Caki2 (cell line): ENCODE measurements at regions of chr11 and their contacts with region 1.

Region 1: GRCh38 chr11:88543902-88544655 is 206.5 kb upstream of the CTSC start:
- DNase-seq: peak; percentile 78

Region 2: DNA sequence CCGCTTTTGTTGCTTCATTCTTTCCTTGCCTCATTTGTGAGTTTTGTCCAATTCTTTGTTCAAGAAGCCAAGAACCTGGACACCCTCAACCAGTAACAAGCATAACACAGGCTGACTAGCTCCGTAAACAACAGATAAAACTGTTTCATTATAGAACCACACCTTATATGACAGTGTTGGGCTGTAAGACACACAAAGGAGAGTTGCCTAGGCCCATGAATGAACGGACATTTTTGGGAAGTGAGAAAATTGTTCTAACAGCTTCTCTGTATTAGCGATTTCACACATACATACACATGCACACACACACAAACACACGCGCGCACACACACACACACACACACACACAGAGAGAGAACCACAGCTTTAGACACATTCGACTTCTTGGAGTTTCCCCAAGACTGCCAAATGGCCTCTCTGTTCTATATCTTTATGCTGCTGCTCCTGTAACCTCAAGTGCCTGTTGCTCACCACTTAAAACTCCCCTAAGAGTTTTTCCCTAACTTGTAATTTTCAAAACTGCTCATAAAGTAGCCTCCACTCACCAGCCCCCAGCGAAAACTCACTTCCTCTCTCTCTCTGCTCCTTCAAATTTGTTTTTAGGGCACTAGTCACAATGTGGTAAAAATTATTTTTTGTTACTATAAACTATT is 242.5 kb before region 1 on chr11:
- in situ Hi-C with region 1: loop called (anchors 25 kb)
- DNase-seq: no peak